ENCODE measurements at regions of chr3 and their contacts with region 1.

Region 1: GRCh38 chr3:33544126-33544525 is 103.9 kb upstream of the UBP1 start:
- DNase-seq: no peak
- H3K4me3 ChIP-seq: no peak overlapping the region
- H3K27ac ChIP-seq: no peak overlapping the region
- H3K4me1 ChIP-seq: no peaks in the 10 kb centered on the region
- H3K27me3 ChIP-seq: no peaks in the 10 kb centered on the region
- CTCF ChIP-seq: no peak

Region 2: GRCh38 chr3:33456756-33457155 is 87.4 kb before region 1 on chr3:
- CTCF ChIA-PET with region 1: no interaction called
- POLR2A ChIA-PET with region 1: interaction called, 24 read pairs
- intact Hi-C with region 1: no loop called
- DNase-seq: no peak
- H3K4me3 ChIP-seq: no peak overlapping the region
- H3K27ac ChIP-seq: no peak overlapping the region
- H3K4me1 ChIP-seq: no peaks in the 10 kb centered on the region
- H3K27me3 ChIP-seq: no peaks in the 10 kb centered on the region
- CTCF ChIP-seq: no peak